Activated T-helper 2 cell treated with anti-CD3 and anti-CD28 coated beads, Interferon-gamma antibody, Interleukin-2, Interleukin-4, amounts not matched to agents 10 μg/mL and 5 μg/mL and 100 μg/mL, durations not matched to agents 14 hours and 24 hours and 36 hours (primary cell): ENCODE measurements at regions of chr9 and their contacts with region 1.

Region 1: GRCh38 chr9:6827439-6827838 is 69.7 kb downstream of the KDM4C start:
- DNase-seq: peak; percentile 27
- H3K4me3 Mint-ChIP-seq: no peak overlapping the region
- H3K27ac Mint-ChIP-seq: peak overlapping the region; percentile 65
- H3K4me1 Mint-ChIP-seq: peaks cover 19% of the 10 kb centered on the region
- H3K27me3 Mint-ChIP-seq: no peaks in the 10 kb centered on the region

Region 2: GRCh38 chr9:6779417-6780241 is 47.8 kb before region 1 on chr9:
- intact Hi-C with region 1: no loop called
- DNase-seq: no peak
- H3K4me3 Mint-ChIP-seq: no peak overlapping the region
- H3K27ac Mint-ChIP-seq: no peak overlapping the region
- H3K4me1 Mint-ChIP-seq: peaks cover 30% of the 10 kb centered on the region
- H3K27me3 Mint-ChIP-seq: no peaks in the 10 kb centered on the region

Region 3: DNA sequence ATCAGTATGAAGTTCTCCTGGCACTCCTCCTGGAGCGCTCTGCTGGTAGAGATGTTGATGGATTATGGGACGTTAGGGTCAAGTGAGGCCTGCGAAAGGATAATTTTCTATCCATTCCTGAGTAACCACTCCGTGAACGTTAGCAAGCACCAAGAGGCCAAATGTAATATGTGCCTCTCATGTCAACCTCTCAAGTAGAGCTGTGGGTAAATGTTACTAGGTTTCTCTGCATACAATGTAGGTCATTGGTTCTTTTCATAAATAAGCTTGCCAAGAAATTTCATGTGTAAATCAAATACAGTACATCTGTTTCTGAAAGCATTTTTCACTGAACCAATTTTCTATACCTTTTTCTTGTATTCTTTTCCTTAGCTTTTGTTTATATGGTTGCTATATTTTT is 56.7 kb after region 1 on chr9:
- intact Hi-C with region 1: no loop called
- DNase-seq: no peak
- H3K4me3 Mint-ChIP-seq: no peak overlapping the region
- H3K27ac Mint-ChIP-seq: no peak overlapping the region
- H3K4me1 Mint-ChIP-seq: peaks cover 3% of the 10 kb centered on the region
- H3K27me3 Mint-ChIP-seq: no peaks in the 10 kb centered on the region

Region 4: GRCh38 chr9:6894135-6894534 is 66.7 kb after region 1 on chr9:
- intact Hi-C with region 1: loop called (anchors 2 kb)
- DNase-seq: no peak
- H3K4me3 Mint-ChIP-seq: peak overlapping the region; percentile 19
- H3K27ac Mint-ChIP-seq: peak overlapping the region; percentile 74
- H3K4me1 Mint-ChIP-seq: peaks cover 51% of the 10 kb centered on the region
- H3K27me3 Mint-ChIP-seq: no peaks in the 10 kb centered on the region

Region 5: DNA sequence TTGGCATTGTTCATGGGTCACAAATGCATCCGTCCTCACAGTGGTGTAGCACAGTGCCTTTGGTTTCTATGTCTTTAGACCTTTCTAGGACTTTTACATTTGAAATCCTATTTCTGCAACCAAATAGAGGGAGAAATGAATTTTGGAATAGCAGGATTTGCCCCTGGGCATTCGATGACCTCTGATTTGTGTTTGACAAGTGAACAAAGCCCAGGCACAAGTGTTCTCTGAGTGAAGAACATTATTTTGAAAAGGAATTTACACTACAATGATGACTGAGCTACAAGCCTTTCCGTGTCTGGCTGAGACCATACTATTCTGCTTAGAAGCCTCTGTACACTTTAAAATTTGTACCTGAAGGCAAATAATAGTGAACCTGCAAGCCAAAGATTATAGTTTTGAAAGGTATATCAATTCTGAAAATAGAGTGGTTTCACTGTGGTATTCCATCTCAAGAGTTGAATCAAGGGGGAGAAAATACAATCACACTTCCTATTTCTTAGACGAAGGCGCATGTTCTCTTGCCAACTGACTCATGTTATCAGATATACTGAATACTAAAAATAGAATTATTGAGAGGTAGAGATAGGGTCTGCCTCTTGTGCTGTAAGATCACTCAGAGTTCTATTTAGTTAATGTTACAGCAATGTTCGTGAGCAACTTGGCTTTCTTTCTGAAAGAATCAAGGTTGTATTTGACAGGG is 227.9 kb after region 1 on chr9:
- intact Hi-C with region 1: loop called (anchors 5 kb)
- DNase-seq: no peak
- H3K4me3 Mint-ChIP-seq: no peak overlapping the region
- H3K27ac Mint-ChIP-seq: no peak overlapping the region
- H3K4me1 Mint-ChIP-seq: peaks cover 29% of the 10 kb centered on the region
- H3K27me3 Mint-ChIP-seq: no peaks in the 10 kb centered on the region